ENCODE measurements at regions of chr3 and their contacts with region 1.

Region 1: DNA sequence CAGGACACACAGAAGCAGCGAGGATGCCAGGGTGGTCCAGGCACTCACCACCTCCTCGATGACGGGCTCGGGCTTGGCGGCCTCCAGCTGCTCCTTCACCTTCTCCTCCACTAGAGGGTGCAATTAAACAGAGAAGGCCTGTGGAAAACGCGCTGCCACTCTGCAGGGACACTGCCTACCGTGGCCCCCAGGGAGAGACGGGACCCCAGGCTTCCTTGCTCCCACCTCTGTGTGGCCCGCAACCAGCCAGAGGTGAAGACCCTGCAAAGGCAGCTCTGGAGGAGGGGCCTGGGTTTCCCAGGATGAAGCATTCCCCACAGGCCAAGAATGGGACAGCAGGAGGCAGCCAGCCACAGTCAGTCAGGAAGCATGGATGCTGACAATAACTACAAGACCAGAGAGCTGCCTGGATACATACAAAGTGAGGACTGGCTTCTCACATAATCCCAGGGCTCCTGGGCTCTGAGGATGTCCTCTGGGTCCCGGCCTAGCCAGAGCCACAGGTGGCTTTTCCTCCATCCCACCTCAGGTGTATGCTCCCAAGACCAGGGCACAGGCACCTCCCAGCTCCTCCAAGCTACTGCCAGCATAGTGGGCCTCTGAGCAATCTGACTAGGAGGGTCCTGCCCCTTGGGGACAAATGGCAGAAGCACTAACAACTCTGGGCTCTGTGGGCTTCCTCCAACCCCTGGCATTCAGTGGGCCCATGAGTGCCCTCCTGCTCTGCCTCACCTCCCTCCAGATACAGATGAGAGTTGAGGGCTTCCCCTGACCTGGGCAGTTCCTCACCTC is 46.2 kb downstream of the PTH1R start:
- DNase-seq: peak; percentile 54
- ATAC-seq: peak; percentile 80
- H3K4me3 ChIP-seq: no peak overlapping the region
- H3K27ac ChIP-seq: no peak overlapping the region
- H3K4me1 ChIP-seq: no peaks in the 10 kb centered on the region
- H3K27me3 ChIP-seq: no peaks in the 10 kb centered on the region
- CTCF ChIP-seq: peak; percentile 91

Region 2: DNA sequence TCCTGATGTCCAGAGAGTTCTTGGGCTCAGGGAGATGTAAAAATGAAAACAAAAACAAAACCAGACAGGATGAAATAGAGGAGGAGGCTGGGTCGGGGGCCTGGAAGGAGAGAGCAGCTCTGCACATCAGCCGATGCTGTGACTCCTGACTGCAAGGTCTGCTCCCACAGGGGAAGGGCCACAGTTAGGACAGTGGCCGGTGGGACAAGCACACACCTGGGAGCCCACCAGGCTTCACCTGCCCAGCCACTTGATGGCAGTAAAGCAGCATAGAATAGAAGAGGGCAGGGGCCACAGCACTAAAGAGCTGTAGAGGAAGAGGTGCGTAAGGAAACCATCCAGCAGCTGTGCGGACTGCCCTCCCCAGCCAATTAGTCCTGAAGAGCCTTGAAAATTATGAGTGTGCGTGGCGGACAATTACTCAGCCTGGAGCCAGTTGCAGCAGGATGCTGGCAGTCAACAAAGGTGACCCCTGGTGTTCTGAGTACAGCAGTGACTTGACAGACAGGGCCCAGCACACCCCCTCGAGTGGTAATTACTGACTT is 260.1 kb before region 1 on chr3:
- CTCF ChIA-PET with region 1: no interaction called
- POLR2A ChIA-PET with region 1: no interaction called
- intact Hi-C with region 1: no loop called
- DNase-seq: peak; percentile 41
- ATAC-seq: peak; percentile 8; the same call in 1 of the 2 replicates
- H3K4me3 ChIP-seq: no peak overlapping the region
- H3K27ac ChIP-seq: no peak overlapping the region
- H3K4me1 ChIP-seq: peaks cover 13% of the 10 kb centered on the region
- H3K27me3 ChIP-seq: no peaks in the 10 kb centered on the region
- CTCF ChIP-seq: peak; percentile 57

Region 3: DNA sequence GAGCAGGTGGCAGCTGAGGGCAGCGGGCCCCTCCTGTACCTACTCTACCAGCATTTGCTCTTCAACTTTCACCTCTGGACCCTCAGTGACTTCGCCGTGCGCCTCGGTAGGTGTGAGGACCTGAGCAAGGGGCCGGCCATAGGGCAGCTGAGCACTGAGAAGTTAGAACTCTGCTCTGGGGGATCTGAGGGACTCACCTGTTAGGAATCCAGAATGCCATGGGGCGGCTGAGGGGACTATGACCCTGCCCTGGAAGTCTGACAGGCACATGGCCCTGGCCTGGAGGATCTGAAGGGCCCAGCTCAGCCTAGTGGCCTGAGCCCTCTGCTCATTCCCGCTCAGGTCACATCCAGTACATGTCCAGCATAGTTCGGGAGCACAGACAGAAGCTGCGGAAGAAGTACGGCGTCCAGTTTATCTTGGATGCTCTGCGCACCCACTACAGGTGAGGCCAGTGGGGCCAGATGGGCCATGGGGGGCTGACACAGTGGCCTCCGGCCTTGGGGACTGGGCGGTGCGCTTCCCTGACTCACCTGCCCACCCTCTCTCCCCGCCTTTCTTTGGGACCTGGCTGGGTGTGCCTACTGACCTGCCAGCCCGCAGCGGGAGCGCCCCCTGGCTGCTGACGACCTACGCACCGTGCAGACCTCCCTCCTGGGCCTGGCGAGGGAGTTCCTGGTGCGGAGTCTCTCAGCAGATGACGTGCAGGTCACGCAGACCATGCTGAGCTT is 74.5 kb after region 1 on chr3:
- CTCF ChIA-PET with region 1: no interaction called
- POLR2A ChIA-PET with region 1: no interaction called
- intact Hi-C with region 1: loop called (anchors 5 kb)
- DNase-seq: peak; percentile 71
- ATAC-seq: peak; percentile 64
- H3K4me3 ChIP-seq: no peak overlapping the region
- H3K27ac ChIP-seq: no peak overlapping the region
- H3K4me1 ChIP-seq: peaks cover 9% of the 10 kb centered on the region
- H3K27me3 ChIP-seq: no peaks in the 10 kb centered on the region
- CTCF ChIP-seq: peak; percentile 85